ENCODE measurements at regions of chr10 and their contacts with region 1.

Region 1: GRCh38 chr10:97234400-97234799 is 48.6 kb upstream of the SLIT1 start:
- DNase-seq: peak in 1 of 35 experiments; percentile 32
- ATAC-seq: no peak
- H3K4me3 ChIP-seq: no peak overlapping the region
- H3K4me3 Mint-ChIP-seq: no peak overlapping the region
- H3K27ac ChIP-seq: no peak overlapping the region
- H3K27ac Mint-ChIP-seq: no peak overlapping the region
- H3K4me1 ChIP-seq: no peaks in the 10 kb centered on the region
- H3K4me1 Mint-ChIP-seq: peaks cover 0 to 6% (median 1%) of the 10 kb centered on the region in 3 donors
- H3K27me3 ChIP-seq: no peaks in the 10 kb centered on the region
- H3K27me3 Mint-ChIP-seq: no peaks in the 10 kb centered on the region

Region 2: GRCh38 chr10:96843823-96844222 is 390.6 kb before region 1 on chr10:
- CTCF ChIA-PET with region 1: interaction called in 1 of 2 experiments, 11 read pairs
- POLR2A ChIA-PET with region 1: no interaction called
- DNase-seq: no peak
- ATAC-seq: no peak
- H3K4me3 ChIP-seq: no peak overlapping the region
- H3K4me3 Mint-ChIP-seq: no peak overlapping the region
- H3K27ac ChIP-seq: no peak overlapping the region
- H3K27ac Mint-ChIP-seq: no peak overlapping the region
- H3K4me1 ChIP-seq: peaks cover 16 to 18% of the 10 kb centered on the region in 2 experiments
- H3K4me1 Mint-ChIP-seq: peaks cover 72 to 75% (median 74%) of the 10 kb centered on the region in 3 donors
- H3K27me3 ChIP-seq: no peaks in the 10 kb centered on the region
- H3K27me3 Mint-ChIP-seq: no peaks in the 10 kb centered on the region